Activated CD8-positive, alpha-beta memory T cell treated with anti-CD3 and anti-CD28 coated beads, Interleukin-2, amount 10 ng/mL, durations not matched to agents 7 days and 5 days (primary cell): ENCODE measurements at regions of chr1 and their contacts with region 1.

Region 1: DNA sequence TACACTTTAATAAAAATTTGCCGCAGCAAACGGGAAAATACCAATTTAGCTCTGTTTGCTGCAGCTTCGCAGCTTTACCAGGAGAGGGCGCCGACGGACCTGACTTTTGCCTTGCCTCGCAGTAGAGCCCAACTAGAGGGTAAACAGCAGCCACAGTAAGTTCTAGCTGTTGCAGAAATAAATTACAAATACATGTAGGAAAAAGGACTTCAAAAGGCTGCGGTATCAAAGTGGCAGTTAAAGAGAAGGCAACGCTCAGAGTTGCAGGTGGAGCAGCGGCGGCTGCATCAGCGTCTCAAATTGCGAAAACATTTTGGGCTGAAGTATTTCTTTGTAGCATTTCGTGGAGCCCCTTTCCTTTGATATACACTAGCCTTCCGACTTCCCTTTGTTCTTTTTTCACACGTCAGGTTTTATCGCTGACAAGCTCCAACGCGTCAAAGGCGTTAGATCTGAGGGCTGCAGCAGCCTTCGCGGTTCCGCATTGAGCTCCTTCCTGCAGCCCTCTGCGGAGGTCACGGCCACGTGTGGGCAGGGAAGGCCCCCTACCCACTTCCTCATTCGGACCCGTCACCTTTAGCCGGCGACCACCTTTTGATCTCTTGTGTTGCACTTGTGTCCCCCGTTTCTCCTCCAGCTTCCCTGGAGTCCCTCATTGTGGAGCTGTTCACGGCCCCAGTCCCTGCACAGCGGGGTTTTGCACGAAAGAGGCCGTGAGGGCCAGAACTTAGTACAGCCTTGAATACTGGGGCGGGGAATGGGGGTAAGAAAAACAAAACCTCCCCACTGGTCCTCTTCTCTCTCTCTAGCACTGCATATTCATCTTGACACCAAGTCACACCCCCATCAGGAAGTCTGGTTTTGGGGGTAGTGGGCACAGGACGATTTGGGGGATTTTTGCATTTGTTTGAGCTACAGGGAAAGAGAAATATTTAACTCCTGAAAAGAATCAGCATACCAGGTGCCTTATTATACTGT is 72.8 kb downstream of the S1PR1 start:
- DNase-seq: peak; percentile 80
- ATAC-seq: peak; percentile 72
- H3K4me3 Mint-ChIP-seq: peak overlapping the region; percentile 73
- H3K27ac Mint-ChIP-seq: peak overlapping the region; percentile 90
- H3K4me1 Mint-ChIP-seq: peaks cover 51% of the 10 kb centered on the region
- H3K27me3 Mint-ChIP-seq: peaks cover 16% of the 10 kb centered on the region

Region 2: DNA sequence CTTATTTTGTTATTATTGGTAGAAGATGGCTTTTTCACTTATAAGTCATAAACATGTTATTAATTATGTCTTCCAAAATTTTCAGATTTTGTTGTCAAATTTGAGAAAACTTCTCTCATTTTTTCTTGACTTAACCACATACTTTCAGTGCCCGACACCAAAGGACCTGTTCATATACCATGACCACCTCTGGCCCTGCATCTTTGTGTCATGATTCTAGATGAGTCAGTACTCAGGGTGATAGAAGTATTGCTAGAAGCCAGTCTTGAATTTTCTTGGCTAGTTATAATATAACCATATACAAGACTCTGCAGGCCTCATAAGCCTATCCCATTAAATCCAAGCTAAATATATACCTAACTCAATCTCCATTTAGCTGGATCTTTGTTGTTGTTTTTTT is 248.6 kb before region 1 on chr1:
- CTCF ChIA-PET with region 1: no interaction called
- DNase-seq: no peak
- ATAC-seq: no peak
- H3K4me3 Mint-ChIP-seq: no peak overlapping the region
- H3K27ac Mint-ChIP-seq: no peak overlapping the region
- H3K4me1 Mint-ChIP-seq: peaks cover 14% of the 10 kb centered on the region
- H3K27me3 Mint-ChIP-seq: no peaks in the 10 kb centered on the region

Region 3: GRCh38 chr1:101288491-101288944 is 21.1 kb before region 1 on chr1:
- CTCF ChIA-PET with region 1: interaction called, 87 read pairs
- DNase-seq: peak; percentile 76
- ATAC-seq: peak; percentile 60
- H3K4me3 Mint-ChIP-seq: no peak overlapping the region
- H3K27ac Mint-ChIP-seq: no peak overlapping the region
- H3K4me1 Mint-ChIP-seq: peaks cover 64% of the 10 kb centered on the region
- H3K27me3 Mint-ChIP-seq: no peaks in the 10 kb centered on the region

Region 4: DNA sequence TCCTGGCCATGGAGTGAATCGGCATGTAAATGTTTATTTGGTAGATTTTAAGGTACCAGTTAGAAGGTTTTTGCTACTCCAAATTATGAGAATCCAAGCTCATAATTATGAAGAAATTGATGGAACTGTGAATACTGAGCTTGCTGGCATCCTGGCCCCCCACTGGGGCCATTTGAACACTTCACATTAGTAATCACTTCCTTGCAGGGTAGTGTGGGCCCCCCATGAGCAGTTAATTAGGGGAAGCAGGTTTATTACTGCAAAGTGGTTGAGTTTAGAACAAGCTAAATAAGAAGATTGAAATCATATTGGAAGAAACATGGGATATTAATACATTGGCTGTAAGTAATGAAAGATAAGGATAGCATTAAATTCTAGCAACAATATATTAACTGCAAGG is 13.9 kb after region 1 on chr1:
- CTCF ChIA-PET with region 1: interaction called, 20 read pairs
- DNase-seq: no peak
- ATAC-seq: no peak
- H3K4me3 Mint-ChIP-seq: no peak overlapping the region
- H3K27ac Mint-ChIP-seq: no peak overlapping the region
- H3K4me1 Mint-ChIP-seq: no peaks in the 10 kb centered on the region
- H3K27me3 Mint-ChIP-seq: peaks cover 16% of the 10 kb centered on the region

Region 5: DNA sequence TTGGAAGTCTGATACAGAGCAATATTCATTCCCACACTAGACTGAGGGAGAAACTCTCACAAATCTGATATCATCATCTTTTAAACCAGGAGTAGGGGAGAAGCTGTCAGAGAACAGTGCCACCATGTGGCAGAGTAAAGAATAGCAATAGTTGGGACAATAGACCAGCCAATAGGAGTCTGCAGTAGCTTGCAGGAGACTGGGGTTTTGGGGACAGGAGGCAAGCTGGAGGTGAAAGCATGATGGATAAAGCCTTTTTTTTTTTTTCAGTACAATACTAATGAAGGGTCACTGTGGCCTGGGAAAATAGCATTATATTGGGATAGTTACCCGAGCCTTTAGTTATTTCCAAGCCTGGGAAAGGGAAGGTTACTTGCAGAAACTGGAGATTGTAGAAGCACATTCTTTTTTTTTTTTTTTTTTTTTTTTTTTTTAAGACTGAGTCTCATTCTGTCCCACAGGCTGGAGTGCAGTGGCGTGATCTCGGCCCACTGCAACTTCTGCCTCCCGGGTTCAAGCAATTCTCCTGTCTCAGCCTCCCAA is 47.9 kb after region 1 on chr1:
- CTCF ChIA-PET with region 1: interaction called, 139 read pairs
- DNase-seq: peak; percentile 80
- ATAC-seq: peak; percentile 99
- H3K4me3 Mint-ChIP-seq: no peak overlapping the region
- H3K27ac Mint-ChIP-seq: no peak overlapping the region
- H3K4me1 Mint-ChIP-seq: peaks cover 7% of the 10 kb centered on the region
- H3K27me3 Mint-ChIP-seq: peaks cover 25% of the 10 kb centered on the region

Region 6: DNA sequence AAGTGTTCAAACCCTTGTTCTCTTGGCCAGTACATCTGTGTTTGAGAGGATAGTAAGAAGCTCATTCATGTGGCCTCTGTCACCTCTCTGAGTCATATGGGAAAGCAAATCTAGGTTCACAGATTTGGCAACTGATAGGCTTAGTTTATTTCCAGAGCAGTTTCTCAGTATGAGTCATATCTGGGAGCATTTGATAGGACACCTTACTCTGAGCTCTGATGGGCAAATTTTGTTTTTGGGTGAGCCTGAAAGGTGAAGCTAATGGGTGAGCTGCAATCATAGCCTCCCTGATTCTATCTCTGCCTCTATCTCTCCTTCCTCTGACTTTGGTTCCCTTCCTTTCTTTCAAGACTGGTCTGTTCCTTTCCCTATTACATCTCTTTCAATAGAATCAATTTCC is 61.6 kb after region 1 on chr1:
- CTCF ChIA-PET with region 1: interaction called, 17 read pairs
- DNase-seq: peak; percentile 46
- ATAC-seq: peak; percentile 93
- H3K4me3 Mint-ChIP-seq: no peak overlapping the region
- H3K27ac Mint-ChIP-seq: no peak overlapping the region
- H3K4me1 Mint-ChIP-seq: peaks cover 13% of the 10 kb centered on the region
- H3K27me3 Mint-ChIP-seq: peaks cover 26% of the 10 kb centered on the region